Caco-2 (cell line): ENCODE measurements at regions of chr7 and their contacts with region 1.

Region 1: GRCh38 chr7:4641667-4642467 is 40.2 kb upstream of the FOXK1 start:
- DNase-seq: peak; percentile 95 to 97
- H3K4me3 ChIP-seq: peak overlapping the region; percentile 83
- H3K4me3 Mint-ChIP-seq: peak overlapping the region; percentile 95
- H3K27ac Mint-ChIP-seq: peak overlapping the region; percentile 98
- H3K4me1 ChIP-seq: peaks cover 12% of the 10 kb centered on the region
- H3K4me1 Mint-ChIP-seq: peaks cover 9% of the 10 kb centered on the region
- H3K27me3 ChIP-seq: no peaks in the 10 kb centered on the region
- H3K27me3 Mint-ChIP-seq: no peaks in the 10 kb centered on the region
- CTCF ChIP-seq: peak; percentile 15 to 31

Region 2: GRCh38 chr7:3466261-3466660 is 1175.6 kb before region 1 on chr7:
- CTCF ChIA-PET with region 1: no interaction called
- POLR2A ChIA-PET with region 1: no interaction called
- intact Hi-C with region 1: no loop called
- DNase-seq: no peak
- H3K4me3 ChIP-seq: no peak overlapping the region
- H3K4me3 Mint-ChIP-seq: no peak overlapping the region
- H3K27ac Mint-ChIP-seq: no peak overlapping the region
- H3K4me1 ChIP-seq: peaks cover 26% of the 10 kb centered on the region
- H3K4me1 Mint-ChIP-seq: peaks cover 24% of the 10 kb centered on the region
- H3K27me3 ChIP-seq: no peaks in the 10 kb centered on the region
- H3K27me3 Mint-ChIP-seq: no peaks in the 10 kb centered on the region
- CTCF ChIP-seq: no peak

Region 3: GRCh38 chr7:4631664-4632171 is 10.1 kb before region 1 on chr7:
- CTCF ChIA-PET with region 1: interaction called, 13 read pairs
- POLR2A ChIA-PET with region 1: interaction called, 10 read pairs
- intact Hi-C with region 1: no loop called
- DNase-seq: peak; percentile 88 to 91
- H3K4me3 ChIP-seq: peak overlapping the region; percentile 33
- H3K4me3 Mint-ChIP-seq: peak overlapping the region; percentile 78
- H3K27ac Mint-ChIP-seq: peak overlapping the region; percentile 89
- H3K4me1 ChIP-seq: peaks cover 13% of the 10 kb centered on the region; the same call in 1 of the 2 replicates
- H3K4me1 Mint-ChIP-seq: peaks cover 7% of the 10 kb centered on the region
- H3K27me3 ChIP-seq: no peaks in the 10 kb centered on the region
- H3K27me3 Mint-ChIP-seq: no peaks in the 10 kb centered on the region
- CTCF ChIP-seq: peak; percentile 73 to 88

Region 4: GRCh38 chr7:4681886-4682620 is 40.2 kb after region 1 on chr7 and contains the start of gene FOXK1:
- CTCF ChIA-PET with region 1: interaction called, 7 read pairs
- POLR2A ChIA-PET with region 1: interaction called, 8 read pairs
- intact Hi-C with region 1: loop called (anchors 1 kb)
- DNase-seq: peak; percentile 69 to 90
- H3K4me3 ChIP-seq: peak within 1 kb of the TSS; percentile 100
- H3K4me3 Mint-ChIP-seq: peak within 1 kb of the TSS; percentile 94
- H3K27ac Mint-ChIP-seq: peak within 1 kb of the TSS; percentile 96
- H3K4me1 ChIP-seq: peaks cover 6% of the 10 kb centered on the region; the same call in 1 of the 2 replicates
- H3K4me1 Mint-ChIP-seq: peaks cover 18% of the 10 kb centered on the region
- H3K27me3 ChIP-seq: no peaks in the 10 kb centered on the region
- H3K27me3 Mint-ChIP-seq: no peaks in the 10 kb centered on the region
- CTCF ChIP-seq: no peak
- total RNA-seq, gene FOXK1: 50.8 and 51.2 TPM in 2 replicates

Region 5: GRCh38 chr7:4738711-4739527 is 97.1 kb after region 1 on chr7:
- CTCF ChIA-PET with region 1: no interaction called
- POLR2A ChIA-PET with region 1: no interaction called
- intact Hi-C with region 1: loop called (anchors 5 kb)
- DNase-seq: peak; percentile 66 to 71
- H3K4me3 ChIP-seq: peak overlapping the region; percentile 24
- H3K4me3 Mint-ChIP-seq: peak overlapping the region; percentile 66
- H3K27ac Mint-ChIP-seq: peak overlapping the region; percentile 89
- H3K4me1 ChIP-seq: peaks cover 24% of the 10 kb centered on the region
- H3K4me1 Mint-ChIP-seq: peaks cover 20% of the 10 kb centered on the region
- H3K27me3 ChIP-seq: no peaks in the 10 kb centered on the region
- H3K27me3 Mint-ChIP-seq: no peaks in the 10 kb centered on the region
- CTCF ChIP-seq: no peak

Region 6: GRCh38 chr7:4753711-4754432 is 112.0 kb after region 1 on chr7:
- CTCF ChIA-PET with region 1: no interaction called
- POLR2A ChIA-PET with region 1: no interaction called
- intact Hi-C with region 1: loop called (anchors 1 kb)
- DNase-seq: peak; percentile 74 to 86
- H3K4me3 ChIP-seq: no peak overlapping the region
- H3K4me3 Mint-ChIP-seq: no peak overlapping the region
- H3K27ac Mint-ChIP-seq: no peak overlapping the region
- H3K4me1 ChIP-seq: 0 out of 2 replicates have a peak, but pooled peaks cover 4% of the 10 kb centered on the region
- H3K4me1 Mint-ChIP-seq: no peaks in the 10 kb centered on the region
- H3K27me3 ChIP-seq: no peaks in the 10 kb centered on the region
- H3K27me3 Mint-ChIP-seq: no peaks in the 10 kb centered on the region
- CTCF ChIP-seq: peak; percentile 81 to 93